GM12878 (cell line): ENCODE measurements at regions of chr3 and their contacts with region 1.

Region 1: DNA sequence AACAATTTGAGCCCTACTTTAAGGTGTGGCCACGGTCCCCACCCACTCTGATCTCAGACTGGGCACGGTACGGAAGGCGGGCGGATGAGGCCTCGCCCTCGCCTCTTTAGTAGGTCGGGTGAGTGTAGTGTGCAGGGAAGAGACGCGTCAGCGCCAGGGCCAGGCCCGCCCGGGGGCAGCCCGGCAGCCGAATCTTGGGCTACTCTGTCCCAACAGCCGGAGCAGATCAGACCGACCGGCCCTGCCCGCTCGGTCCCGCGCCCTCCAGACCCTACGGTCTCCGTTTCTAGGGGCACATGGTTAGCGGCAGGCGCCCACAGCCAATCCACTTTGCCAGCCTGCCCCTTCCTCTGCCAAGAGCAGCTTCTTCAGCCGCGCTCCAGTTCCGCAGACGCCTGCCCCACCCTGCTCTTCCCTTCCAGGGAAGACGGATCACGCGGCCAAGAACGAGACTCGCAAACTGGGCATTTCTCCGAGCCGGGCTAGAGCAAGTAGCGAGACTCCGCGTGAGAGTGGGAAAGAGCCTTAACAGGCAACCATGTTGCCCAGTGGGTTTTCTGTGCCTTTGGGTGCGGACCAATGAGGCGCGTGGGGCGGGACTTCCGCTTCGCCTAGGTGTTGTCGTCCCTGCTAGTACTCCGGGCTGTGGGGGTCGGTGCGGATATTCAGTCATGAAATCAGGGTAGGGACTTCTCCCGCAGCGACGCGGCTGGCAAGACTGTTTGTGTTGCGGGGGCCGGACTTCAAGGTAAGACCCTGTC is at the start of gene RNF13:
- DNase-seq: peak; percentile 87
- ATAC-seq: peak; percentile 94
- H3K4me3 ChIP-seq: peak within 1 kb of the TSS; percentile 80
- H3K27ac ChIP-seq: peak within 1 kb of the TSS; percentile 93
- H3K4me1 ChIP-seq: no peaks in the 10 kb centered on the region
- H3K27me3 ChIP-seq: no peaks in the 10 kb centered on the region
- CTCF ChIP-seq: no peak
- EP300 ChIP-seq: no peak
- POLR2A ChIP-seq: peak; percentile 83
- RAD21 ChIP-seq: no peak
- polyA plus RNA-seq, gene RNF13: 38.7 to 45.9 TPM

Region 2: DNA sequence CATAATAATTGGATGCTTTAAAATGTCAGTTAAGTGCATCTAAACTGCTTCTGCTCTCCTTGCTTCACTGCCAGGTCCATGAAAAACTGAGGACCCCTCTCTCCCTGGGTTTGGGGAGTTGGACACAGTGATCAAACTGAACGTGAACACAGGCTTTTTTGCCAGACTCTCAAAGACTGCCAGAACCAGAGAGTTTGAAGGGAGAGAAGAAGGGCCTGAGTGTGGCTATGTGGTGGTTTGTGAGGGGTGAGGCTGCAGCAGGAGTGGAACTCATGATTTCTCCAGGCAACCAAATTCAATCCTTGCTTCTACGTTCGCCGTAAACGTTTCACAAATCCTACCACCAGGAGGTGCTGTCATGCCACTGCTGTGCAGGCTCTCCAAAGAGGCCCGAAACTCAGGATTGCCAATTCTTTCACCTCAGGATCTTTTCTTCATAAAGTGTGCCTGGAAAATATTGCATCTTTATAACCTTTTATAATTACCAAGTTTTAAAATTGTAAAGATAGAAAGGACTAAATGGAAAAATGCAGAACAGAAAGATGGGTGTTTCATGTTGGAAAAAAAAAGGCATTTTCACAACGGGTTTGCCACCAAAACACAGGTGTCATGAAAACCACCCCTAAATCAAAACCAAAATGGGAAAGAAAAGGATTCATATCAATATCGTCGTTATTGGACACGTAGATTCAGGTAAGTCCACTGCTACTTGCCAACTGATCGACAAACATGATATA is 318.6 kb before region 1 on chr3:
- CTCF ChIA-PET with region 1: interaction called, 27 read pairs
- POLR2A ChIA-PET with region 1: no interaction called
- RAD21 ChIA-PET with region 1: interaction called, 6 read pairs
- SMC1A ChIA-PET with region 1: interaction called, 6 read pairs
- in situ Hi-C with region 1: no loop called
- intact Hi-C with region 1: loop called (anchors 1 kb)
- DNase-seq: no peak
- ATAC-seq: peak; percentile 83
- H3K4me3 ChIP-seq: no peak overlapping the region
- H3K27ac ChIP-seq: no peak overlapping the region
- H3K4me1 ChIP-seq: no peaks in the 10 kb centered on the region
- H3K27me3 ChIP-seq: no peaks in the 10 kb centered on the region; a peak in 1 of 4 replicates
- CTCF ChIP-seq: peak; percentile 57 to 80 (median 75)
- EP300 ChIP-seq: no peak
- POLR2A ChIP-seq: no peak
- RAD21 ChIP-seq: peak; percentile 86

Region 3: GRCh38 chr3:149575961-149576564 is 236.7 kb before region 1 on chr3:
- CTCF ChIA-PET with region 1: interaction called, 3 read pairs
- POLR2A ChIA-PET with region 1: no interaction called
- RAD21 ChIA-PET with region 1: interaction called, 3 read pairs
- SMC1A ChIA-PET with region 1: interaction called, 10 read pairs
- in situ Hi-C with region 1: no loop called
- intact Hi-C with region 1: no loop called
- DNase-seq: no peak
- ATAC-seq: peak; percentile 51
- H3K4me3 ChIP-seq: peak overlapping the region; percentile 10; the same call in 1 of the 2 replicates
- H3K27ac ChIP-seq: peak overlapping the region; percentile 70
- H3K4me1 ChIP-seq: peaks cover 59% of the 10 kb centered on the region
- H3K27me3 ChIP-seq: no peaks in the 10 kb centered on the region
- CTCF ChIP-seq: no peak
- EP300 ChIP-seq: 0 out of 4 replicates have a peak, but pooled peaks of 1 of the 2 experiments have one; percentile 35
- POLR2A ChIP-seq: no peak
- RAD21 ChIP-seq: no peak

Region 4: GRCh38 chr3:149732234-149732633 is 80.6 kb before region 1 on chr3:
- CTCF ChIA-PET with region 1: no interaction called
- POLR2A ChIA-PET with region 1: no interaction called
- RAD21 ChIA-PET with region 1: no interaction called
- SMC1A ChIA-PET with region 1: no interaction called
- in situ Hi-C with region 1: no loop called
- intact Hi-C with region 1: no loop called
- DNase-seq: no peak
- ATAC-seq: no peak
- H3K4me3 ChIP-seq: no peak overlapping the region
- H3K27ac ChIP-seq: no peak overlapping the region
- H3K4me1 ChIP-seq: peaks cover 6% of the 10 kb centered on the region
- H3K27me3 ChIP-seq: no peaks in the 10 kb centered on the region
- CTCF ChIP-seq: no peak
- EP300 ChIP-seq: no peak
- POLR2A ChIP-seq: no peak
- RAD21 ChIP-seq: no peak

Region 5: DNA sequence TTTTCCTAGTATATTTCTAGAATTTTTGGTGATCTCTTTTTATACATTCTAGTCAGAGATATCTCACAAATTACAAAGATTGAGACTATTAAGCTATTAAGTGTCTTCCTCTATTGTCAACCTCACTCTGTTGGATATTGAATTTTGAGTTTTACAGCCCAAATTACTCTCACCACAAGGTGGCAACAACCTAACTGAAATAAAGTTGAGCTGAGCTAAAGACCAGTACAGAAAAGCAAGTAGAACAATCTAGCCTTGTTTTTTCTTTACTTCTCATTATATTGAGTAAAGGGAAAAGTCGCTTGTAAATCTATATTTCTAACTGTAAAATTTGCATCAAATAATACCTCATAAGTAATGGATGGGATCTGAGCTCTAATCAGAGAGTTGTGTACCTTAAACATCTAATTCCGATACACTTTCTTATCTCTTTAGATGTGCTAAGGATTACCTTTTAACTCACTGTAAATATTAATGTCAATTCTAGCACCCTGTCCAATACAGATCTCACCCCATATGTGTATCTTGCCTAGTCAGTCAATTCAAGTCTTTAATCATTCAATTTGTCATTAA is 46.9 kb before region 1 on chr3:
- CTCF ChIA-PET with region 1: interaction called, 126 read pairs
- POLR2A ChIA-PET with region 1: interaction called, 3 read pairs
- RAD21 ChIA-PET with region 1: interaction called, 20 read pairs
- SMC1A ChIA-PET with region 1: interaction called, 22 read pairs
- in situ Hi-C with region 1: no loop called
- intact Hi-C with region 1: loop called (anchors 5 kb)
- DNase-seq: no peak
- ATAC-seq: peak; percentile 50; the same call in 2 of the 3 replicates
- H3K4me3 ChIP-seq: no peak overlapping the region
- H3K27ac ChIP-seq: no peak overlapping the region
- H3K4me1 ChIP-seq: no peaks in the 10 kb centered on the region
- H3K27me3 ChIP-seq: peaks cover 0 to 7% of the 10 kb centered on the region in 2 experiments; a peak in 1 of 4 replicates
- CTCF ChIP-seq: peak; percentile 39 to 52 (median 47); a peak in 5 of 6 replicates
- EP300 ChIP-seq: no peak
- POLR2A ChIP-seq: no peak
- RAD21 ChIP-seq: peak; percentile 40; the same call in 1 of the 2 replicates

Region 6: DNA sequence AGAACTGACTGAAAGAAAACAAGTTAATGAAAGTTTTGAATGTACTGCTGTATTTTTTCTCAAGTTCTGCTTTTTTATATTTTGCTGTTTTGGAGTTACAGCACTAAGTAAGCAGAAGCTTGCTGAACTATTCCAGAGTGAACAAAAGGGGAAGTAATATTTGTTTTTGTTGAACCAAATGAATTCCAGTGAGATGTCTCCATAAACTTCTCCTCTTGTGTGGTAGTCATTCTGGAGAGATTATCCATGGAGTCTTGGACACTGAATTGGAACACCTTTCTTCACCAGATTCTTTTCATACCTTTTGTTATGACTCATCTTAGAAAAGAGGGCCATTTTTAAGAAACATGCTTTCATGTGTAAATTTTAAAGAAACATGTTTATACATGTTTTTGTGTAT is 29.2 kb before region 1 on chr3:
- CTCF ChIA-PET with region 1: interaction called, 27 read pairs
- POLR2A ChIA-PET with region 1: no interaction called
- RAD21 ChIA-PET with region 1: no interaction called
- SMC1A ChIA-PET with region 1: no interaction called
- in situ Hi-C with region 1: no loop called
- intact Hi-C with region 1: no loop called
- DNase-seq: no peak
- ATAC-seq: no peak; the same call in 1 of the 3 replicates
- H3K4me3 ChIP-seq: no peak overlapping the region
- H3K27ac ChIP-seq: no peak overlapping the region
- H3K4me1 ChIP-seq: peaks cover 4% of the 10 kb centered on the region
- H3K27me3 ChIP-seq: no peaks in the 10 kb centered on the region
- CTCF ChIP-seq: no peak
- EP300 ChIP-seq: no peak
- POLR2A ChIP-seq: no peak
- RAD21 ChIP-seq: no peak

Region 7: DNA sequence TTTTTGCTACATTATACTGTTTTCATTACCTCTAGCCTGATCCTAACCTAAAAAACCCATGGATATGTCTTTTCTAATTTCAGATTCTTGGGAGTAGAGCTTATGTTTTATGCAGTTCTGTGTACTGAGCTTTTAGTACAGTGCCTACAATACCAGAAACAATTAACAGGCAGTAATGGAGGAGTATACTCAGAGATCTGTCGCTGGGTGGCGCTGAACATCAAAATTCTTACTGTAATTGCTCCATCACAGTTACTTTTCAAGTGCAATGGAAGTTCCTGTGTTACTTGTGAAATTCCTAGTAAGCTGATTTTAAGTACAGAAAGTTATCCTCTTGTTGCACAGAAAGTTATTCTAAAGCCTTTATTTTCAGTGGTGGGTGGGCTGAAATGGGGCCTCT is 67.1 kb after region 1 on chr3:
- CTCF ChIA-PET with region 1: interaction called, 11 read pairs
- POLR2A ChIA-PET with region 1: interaction called, 3 read pairs
- RAD21 ChIA-PET with region 1: interaction called, 3 read pairs
- SMC1A ChIA-PET with region 1: interaction called, 7 read pairs
- in situ Hi-C with region 1: no loop called
- intact Hi-C with region 1: no loop called
- DNase-seq: no peak
- ATAC-seq: peak; percentile 95
- H3K4me3 ChIP-seq: no peak overlapping the region
- H3K27ac ChIP-seq: no peak overlapping the region
- H3K4me1 ChIP-seq: no peaks in the 10 kb centered on the region
- H3K27me3 ChIP-seq: no peaks in the 10 kb centered on the region
- CTCF ChIP-seq: peak; percentile 43 to 59 (median 55); a peak in 5 of 6 replicates
- EP300 ChIP-seq: no peak
- POLR2A ChIP-seq: no peak
- RAD21 ChIP-seq: peak; percentile 30; the same call in 1 of the 2 replicates

Region 8: DNA sequence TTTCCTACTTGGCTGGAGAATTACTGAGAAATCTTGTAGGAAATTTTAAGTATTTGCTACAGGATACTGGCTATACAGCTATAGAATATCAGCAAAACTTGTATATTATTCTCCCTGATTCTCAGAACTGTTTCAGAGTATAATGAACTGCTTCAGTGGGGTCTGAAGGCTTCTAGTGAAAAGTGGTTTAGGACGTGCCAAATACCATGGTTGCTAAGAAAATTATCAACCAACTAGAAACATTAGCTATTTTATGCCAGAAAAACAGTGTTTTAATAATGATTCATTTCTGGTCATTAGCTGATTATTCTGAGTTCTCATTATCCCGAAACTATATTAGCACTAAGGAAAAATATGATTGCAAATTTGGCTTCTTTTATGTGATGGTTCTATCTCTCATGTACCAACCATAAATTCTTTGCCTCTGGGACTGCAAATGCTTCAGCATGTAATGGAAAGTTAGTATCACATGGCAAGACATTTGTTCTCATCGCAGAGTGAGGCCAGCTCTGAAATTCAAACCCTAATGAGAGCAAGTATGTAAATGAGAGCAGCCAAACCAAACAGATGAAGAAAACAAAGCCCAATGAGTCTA is 584.3 kb after region 1 on chr3:
- CTCF ChIA-PET with region 1: no interaction called
- POLR2A ChIA-PET with region 1: no interaction called
- RAD21 ChIA-PET with region 1: no interaction called
- SMC1A ChIA-PET with region 1: no interaction called
- in situ Hi-C with region 1: no loop called
- intact Hi-C with region 1: no loop called
- DNase-seq: no peak
- ATAC-seq: no peak
- H3K4me3 ChIP-seq: no peak overlapping the region
- H3K27ac ChIP-seq: no peak overlapping the region
- H3K4me1 ChIP-seq: no peaks in the 10 kb centered on the region
- H3K27me3 ChIP-seq: no peaks in the 10 kb centered on the region; a peak in 1 of 4 replicates
- CTCF ChIP-seq: no peak
- EP300 ChIP-seq: no peak
- POLR2A ChIP-seq: no peak
- RAD21 ChIP-seq: no peak